ENCODE measurements at regions of chr1 and their contacts with region 1.

Region 1: GRCh38 chr1:161382214-161383019 is 14.7 kb upstream of the CFAP126 start:
- H3K4me3 ChIP-seq: no peak overlapping the region
- H3K27ac ChIP-seq: no peak overlapping the region
- H3K4me1 ChIP-seq: no peaks in the 10 kb centered on the region
- CTCF ChIP-seq: 0 out of 2 replicates have a peak, but pooled peaks have one; percentile 13

Region 2: DNA sequence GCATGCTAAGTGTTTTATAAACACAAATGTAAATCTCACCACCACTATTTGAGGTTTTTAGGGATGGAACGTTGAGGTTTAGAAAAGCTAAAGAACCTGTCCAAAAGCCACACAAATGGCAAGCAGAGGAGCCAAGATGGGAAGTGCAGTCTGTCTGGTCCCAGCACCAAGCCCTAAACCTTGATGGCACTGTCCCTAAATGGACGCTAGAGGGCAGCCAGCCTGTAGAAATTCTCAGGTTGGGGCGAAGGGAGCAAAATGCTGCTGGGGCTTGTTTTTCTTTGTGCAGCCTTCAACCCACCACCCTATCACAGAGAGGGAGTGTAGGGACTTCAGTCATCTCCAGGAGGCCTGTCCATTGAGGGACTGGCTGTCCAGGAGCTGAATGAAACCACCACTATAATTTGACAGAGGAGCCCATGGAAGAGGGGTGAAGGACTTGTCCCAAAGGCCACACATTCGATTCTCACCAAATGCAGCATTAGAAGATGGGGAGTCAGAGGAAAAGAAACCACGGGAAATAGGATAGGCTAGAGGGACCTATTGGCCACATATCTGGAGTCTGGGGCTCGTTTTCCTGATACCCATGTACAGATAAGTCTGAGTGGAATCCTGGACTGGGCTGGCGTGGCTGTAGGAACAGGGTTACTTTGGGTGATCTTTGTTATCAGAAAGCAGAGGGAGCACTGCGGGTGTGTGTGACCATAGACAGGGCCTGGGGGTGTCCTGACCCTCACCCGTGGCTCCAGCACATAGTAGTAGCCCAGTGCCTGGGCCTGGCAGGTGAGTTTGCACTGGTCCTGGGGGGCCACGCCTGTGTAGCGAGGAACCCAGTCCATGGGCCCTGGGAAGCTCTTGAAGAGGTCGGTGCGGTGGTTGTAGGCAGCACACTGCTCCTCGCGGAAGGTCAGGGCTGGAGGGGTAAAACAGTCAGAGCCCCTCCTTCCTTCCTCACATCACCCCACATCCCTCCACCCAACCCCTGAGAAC is 189.6 kb before region 1 on chr1:
- CTCF ChIA-PET with region 1: interaction called, 20 read pairs
- POLR2A ChIA-PET with region 1: no interaction called
- H3K4me3 ChIP-seq: no peak overlapping the region
- H3K27ac ChIP-seq: no peak overlapping the region
- H3K4me1 ChIP-seq: no peaks in the 10 kb centered on the region
- CTCF ChIP-seq: peak; percentile 71

Region 3: DNA sequence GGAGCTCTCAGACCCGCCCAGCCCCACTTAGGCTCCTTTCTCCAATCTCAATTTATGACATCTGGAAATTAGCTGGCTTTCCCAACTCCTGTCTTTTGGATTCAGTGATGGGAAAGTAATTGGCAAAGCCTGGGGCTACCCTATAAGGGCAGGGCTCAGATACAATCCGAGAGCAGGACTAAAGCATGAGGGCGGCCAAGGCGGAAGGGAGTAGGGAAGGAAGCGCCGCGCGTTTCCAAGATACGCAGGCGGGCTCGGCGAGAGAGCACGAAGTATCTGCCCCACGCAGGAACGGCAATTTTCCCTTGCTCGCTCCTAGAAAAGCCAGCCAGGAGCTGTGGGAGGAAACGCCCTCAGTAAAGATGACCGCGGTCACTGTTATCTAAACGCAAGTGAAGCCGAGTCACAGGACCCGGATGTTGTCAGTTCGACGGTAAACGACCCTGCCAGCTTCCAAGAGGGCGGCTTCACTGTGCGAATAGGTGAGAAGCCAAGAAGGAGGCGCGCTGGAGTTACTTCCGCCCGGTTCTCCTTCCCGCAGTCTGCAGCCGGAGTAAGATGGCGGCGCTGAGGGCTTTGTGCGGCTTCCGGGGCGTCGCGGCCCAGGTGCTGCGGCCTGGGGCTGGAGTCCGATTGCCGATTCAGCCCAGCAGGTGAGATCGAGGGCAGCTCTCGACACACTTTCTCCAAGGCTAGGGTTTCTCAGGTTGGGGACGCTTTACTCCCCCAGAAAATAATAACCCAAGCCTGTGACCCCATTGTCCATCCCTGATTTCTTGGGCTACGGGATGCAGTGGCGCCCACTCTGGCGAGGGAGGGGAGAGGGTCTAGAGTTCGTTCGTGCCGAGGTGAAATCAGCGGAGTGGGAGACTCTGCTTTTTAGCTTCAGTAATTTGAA is 180.3 kb before region 1 on chr1 and contains the start of gene NDUFS2:
- CTCF ChIA-PET with region 1: interaction called, 14 read pairs
- POLR2A ChIA-PET with region 1: interaction called, 9 read pairs
- H3K4me3 ChIP-seq: peak within 1 kb of the TSS; percentile 56
- H3K27ac ChIP-seq: peak within 1 kb of the TSS; percentile 72
- H3K4me1 ChIP-seq: peaks cover 9% of the 10 kb centered on the region; the same call in 1 of the 2 replicates
- CTCF ChIP-seq: peak; percentile 79

Region 4: GRCh38 chr1:161209790-161210409 is 172.5 kb before region 1 on chr1:
- CTCF ChIA-PET with region 1: interaction called, 34 read pairs
- POLR2A ChIA-PET with region 1: interaction called, 9 read pairs
- H3K4me3 ChIP-seq: no peak overlapping the region
- H3K27ac ChIP-seq: no peak overlapping the region
- H3K4me1 ChIP-seq: no peaks in the 10 kb centered on the region
- CTCF ChIP-seq: peak; percentile 83

Region 5: DNA sequence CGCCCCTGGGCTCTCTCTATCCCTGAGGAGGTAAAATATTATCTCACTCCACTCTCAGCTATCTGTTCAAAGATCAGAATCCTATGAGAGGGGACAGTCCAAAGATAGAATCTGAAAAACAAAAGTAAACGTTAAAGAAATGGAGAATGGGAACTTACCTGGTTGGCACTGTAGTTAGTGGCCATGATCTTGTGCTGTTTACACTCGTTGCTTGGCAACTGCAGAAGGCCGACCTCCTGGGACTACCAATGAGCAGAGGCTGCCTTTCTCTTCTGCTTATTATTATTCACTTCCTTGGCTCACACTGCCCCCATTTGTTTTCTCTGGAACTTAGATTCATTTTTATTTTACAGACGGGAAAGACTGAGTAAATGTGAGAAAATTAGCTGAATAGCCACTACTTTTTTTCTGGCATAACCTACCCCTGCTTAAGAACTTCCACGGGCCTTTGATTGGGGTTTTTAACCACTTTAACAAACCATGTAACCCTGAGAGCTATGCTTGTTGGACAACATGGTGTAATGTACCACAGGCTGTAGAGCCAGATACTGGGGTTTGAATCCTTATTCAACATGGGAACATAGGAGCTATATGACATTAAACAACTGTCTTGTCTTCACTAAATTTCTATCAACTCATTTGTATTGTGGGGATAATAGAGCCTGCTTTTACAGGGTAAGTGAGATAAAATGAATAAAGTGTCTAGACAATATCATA is 14.6 kb before region 1 on chr1 and contains the start of gene CFAP126:
- CTCF ChIA-PET with region 1: interaction called, 54 read pairs
- POLR2A ChIA-PET with region 1: no interaction called
- H3K4me3 ChIP-seq: no peak within 1 kb of the TSS
- H3K27ac ChIP-seq: no peak within 1 kb of the TSS
- H3K4me1 ChIP-seq: 0 out of 2 replicates have a peak, but pooled peaks cover 2% of the 10 kb centered on the region
- CTCF ChIP-seq: no peak

Measured in HEK293 (cell line).